GM18951 (cell line): ENCODE measurements at regions of chrX and their contacts with region 1.

Region 1: GRCh38 chrX:19904778-19905367 is 17.5 kb upstream of the SH3KBP1 start:
- POLR2A ChIP-seq: no peak

Region 2: DNA sequence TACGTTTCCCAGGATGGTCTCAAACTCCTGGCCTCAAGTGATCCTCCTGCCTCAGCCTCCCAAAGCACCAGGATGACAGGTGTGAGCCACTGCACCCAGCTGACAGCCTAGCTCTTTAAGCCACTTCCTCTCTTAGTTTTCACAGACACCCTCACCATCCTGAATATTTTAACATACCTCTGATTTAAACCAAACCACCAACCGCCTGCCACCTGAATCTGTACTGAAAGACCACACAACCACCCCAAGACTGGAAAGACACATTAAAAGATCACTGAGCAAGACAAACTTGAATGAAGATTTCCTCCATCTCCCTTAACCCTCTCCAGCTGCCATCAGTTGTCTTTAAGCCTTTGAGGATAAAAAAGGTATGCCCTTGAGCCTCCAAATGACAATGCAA is 128.1 kb before region 1 on chrX:
- in situ Hi-C with region 1: no loop called
- POLR2A ChIP-seq: no peak

Region 3: GRCh38 chrX:20347481-20347880 is 442.6 kb after region 1 on chrX:
- in situ Hi-C with region 1: loop called (anchors 25 kb)
- POLR2A ChIP-seq: no peak

Region 4: GRCh38 chrX:20378291-20378920 is 473.5 kb after region 1 on chrX:
- in situ Hi-C with region 1: no loop called
- POLR2A ChIP-seq: no peak